Activated naive CD4-positive, alpha-beta T cell treated with anti-CD3 and anti-CD28 coated beads for 36 hours (primary cell): ENCODE measurements at regions of chr5 and their contacts with region 1.

Region 1: DNA sequence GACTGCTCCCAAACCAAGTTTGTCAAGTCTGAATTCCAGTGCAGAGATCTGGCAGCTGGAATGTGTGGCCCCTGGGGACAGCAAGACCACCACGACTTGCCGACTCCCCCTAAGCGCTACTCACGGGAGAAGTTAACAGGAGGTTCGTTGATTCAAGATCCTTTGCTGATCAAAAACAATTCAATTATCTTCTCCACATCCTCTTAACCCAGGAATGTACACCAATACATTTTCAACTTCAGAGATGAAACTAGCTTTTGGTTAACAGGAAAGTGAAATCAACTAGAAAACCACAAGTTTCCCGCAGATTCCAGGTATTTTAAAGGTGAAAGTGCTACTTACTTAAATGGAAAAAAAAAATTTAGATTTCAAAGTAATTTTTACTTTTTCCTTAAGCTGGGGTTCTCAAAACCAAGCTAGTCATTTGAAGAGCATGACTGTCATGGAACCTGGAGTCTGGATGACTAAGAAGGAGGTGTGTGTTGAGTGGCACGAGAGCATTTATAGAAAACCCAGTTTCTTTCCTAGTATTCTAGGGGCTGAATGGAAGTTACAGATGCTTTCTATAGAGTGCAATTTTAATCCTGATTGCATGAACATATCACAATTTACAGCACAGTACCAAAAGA is 257.5 kb upstream of the PANK3 start:
- DNase-seq: peak; percentile 53
- H3K4me3 Mint-ChIP-seq: peak overlapping the region; percentile 46
- H3K27ac Mint-ChIP-seq: peak overlapping the region; percentile 73
- H3K4me1 Mint-ChIP-seq: peaks cover 31% of the 10 kb centered on the region
- H3K27me3 Mint-ChIP-seq: peaks cover 18% of the 10 kb centered on the region

Region 2: GRCh38 chr5:168798065-168799023 is 38.4 kb before region 1 on chr5:
- CTCF ChIA-PET with region 1: interaction called, 3 read pairs
- intact Hi-C with region 1: loop called (anchors 1 kb)
- DNase-seq: peak; percentile 26
- H3K4me3 Mint-ChIP-seq: no peak overlapping the region
- H3K27ac Mint-ChIP-seq: no peak overlapping the region
- H3K4me1 Mint-ChIP-seq: peaks cover 27% of the 10 kb centered on the region
- H3K27me3 Mint-ChIP-seq: peaks cover 16% of the 10 kb centered on the region

Region 3: DNA sequence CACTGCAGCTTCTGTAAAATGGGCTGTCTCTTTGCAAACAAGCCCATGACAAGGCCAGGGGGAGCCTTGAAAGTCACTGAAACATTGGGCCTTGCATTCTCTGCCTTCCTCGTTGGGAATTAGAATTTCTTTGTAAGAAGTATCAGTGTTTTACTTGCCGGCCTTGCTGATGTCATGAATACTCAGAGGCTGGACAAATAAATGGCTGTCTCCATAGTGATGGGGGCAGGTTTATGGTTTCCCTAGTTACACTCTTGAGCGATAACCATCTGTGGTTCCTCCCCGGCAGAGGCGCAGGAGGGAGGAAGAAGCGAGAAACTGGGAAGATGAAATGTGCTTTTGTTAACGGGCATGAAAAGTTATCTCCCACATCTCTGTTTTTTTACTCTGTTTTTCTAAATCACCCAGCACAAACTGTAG is 15.2 kb after region 1 on chr5:
- CTCF ChIA-PET with region 1: no interaction called
- intact Hi-C with region 1: loop called (anchors 1 kb)
- DNase-seq: peak; percentile 8
- H3K4me3 Mint-ChIP-seq: no peak overlapping the region
- H3K27ac Mint-ChIP-seq: no peak overlapping the region
- H3K4me1 Mint-ChIP-seq: peaks cover 11% of the 10 kb centered on the region
- H3K27me3 Mint-ChIP-seq: peaks cover 28% of the 10 kb centered on the region

Region 4: DNA sequence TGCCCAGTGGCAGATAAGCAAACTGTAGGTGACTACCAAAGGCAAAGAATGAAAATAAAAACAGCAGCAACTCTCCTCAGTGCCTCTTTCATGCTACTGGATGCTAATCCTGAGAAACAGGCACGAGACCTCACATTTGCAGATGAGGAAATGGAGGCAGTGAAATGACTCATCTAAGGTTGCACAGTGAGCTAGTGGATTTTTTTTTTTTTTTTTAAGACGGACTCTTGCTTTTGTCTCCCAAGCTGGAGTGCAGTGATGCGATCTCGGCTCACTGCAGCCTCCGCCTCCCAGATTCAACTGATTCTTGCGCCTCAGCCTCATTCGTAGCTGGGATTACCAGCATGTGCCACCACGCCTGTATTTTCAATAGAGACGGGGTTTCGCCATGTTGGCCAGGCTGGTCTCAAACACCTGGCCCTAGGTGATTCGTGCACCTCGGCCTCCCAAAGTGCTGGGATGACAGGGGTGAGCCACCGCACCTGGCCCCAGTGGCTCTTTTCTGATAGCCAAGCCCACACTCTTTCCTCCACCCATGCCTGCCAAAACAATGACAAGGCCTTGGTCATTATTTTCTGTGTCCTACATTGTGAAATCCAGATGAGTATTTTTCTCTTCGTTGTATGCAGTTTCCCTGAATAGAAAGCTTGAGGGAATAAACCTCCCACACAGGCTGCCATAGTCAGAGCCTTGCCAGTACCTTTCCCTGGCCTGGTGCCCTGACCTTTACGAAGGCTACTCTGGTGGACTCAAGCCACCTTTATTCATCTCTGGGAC is 819.6 kb after region 1 on chr5:
- CTCF ChIA-PET with region 1: no interaction called
- intact Hi-C with region 1: loop called (anchors 5 kb)
- DNase-seq: peak; percentile 61
- H3K4me3 Mint-ChIP-seq: peak overlapping the region; percentile 29
- H3K27ac Mint-ChIP-seq: peak overlapping the region; percentile 77
- H3K4me1 Mint-ChIP-seq: peaks cover 61% of the 10 kb centered on the region
- H3K27me3 Mint-ChIP-seq: no peaks in the 10 kb centered on the region

Region 5: GRCh38 chr5:169805527-169805934 is 968.8 kb after region 1 on chr5:
- CTCF ChIA-PET with region 1: no interaction called
- intact Hi-C with region 1: loop called (anchors 5 kb)
- DNase-seq: peak; percentile 81
- H3K4me3 Mint-ChIP-seq: peak overlapping the region; percentile 1
- H3K27ac Mint-ChIP-seq: peak overlapping the region; percentile 92
- H3K4me1 Mint-ChIP-seq: peaks cover 38% of the 10 kb centered on the region
- H3K27me3 Mint-ChIP-seq: no peaks in the 10 kb centered on the region